Endothelial cell of umbilical vein (primary cell): ENCODE measurements at regions of chr16 and their contacts with region 1.

Region 1: GRCh38 chr16:29784901-29785500 is 5.5 kb upstream of the KIF22 start:
- DNase-seq: peak; percentile 76
- H3K4me3 ChIP-seq: peak overlapping the region in 1 of 3 experiments; percentile 5
- H3K27ac ChIP-seq: no peak overlapping the region
- H3K4me1 ChIP-seq: peaks cover 10% of the 10 kb centered on the region
- H3K27me3 ChIP-seq: peaks cover 7 to 16% of the 10 kb centered on the region in 2 experiments
- CTCF ChIP-seq: peak; percentile 91 to 98
- POLR2A ChIP-seq: no peak

Region 2: DNA sequence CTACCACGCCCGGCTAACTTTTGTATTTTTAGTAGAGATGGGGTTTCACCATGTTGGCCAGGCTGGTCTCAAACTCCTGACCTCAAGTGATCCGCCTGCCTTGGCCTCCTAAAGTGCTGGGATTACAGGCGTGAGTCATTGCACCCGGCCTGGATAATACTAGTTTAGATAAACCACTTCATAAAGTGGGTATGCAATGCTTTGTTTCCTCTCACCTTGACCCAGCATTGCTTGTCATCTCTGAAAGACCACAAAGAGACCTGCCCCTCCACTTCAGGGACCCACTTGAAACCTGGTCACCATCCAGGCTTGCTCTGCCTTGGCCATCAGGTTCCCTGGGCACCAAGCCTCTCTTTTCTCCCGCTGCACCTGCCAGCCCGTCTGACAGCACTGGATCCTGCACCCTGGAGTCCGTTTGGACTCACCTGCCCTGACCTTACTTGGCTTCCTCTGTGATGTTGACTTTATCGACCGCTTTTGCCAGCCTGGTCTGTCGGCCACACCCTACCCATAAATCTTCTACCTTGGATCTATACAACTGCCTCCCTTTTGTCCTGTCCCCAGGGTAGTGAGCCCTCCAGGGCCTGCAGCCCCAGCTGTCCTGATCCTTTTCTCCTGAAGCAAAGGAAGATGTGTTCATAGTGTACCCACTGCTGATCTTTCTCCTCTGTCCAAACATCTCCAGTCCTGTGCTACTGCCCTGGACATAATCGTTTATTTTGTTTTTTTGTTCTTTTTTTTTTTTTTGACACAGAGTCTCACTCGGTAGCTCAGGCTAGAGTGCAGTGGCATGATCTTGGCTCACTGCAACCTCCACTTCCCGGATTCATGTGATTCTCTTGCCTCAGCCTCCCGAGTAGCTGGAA is 19.6 kb before region 1 on chr16:
- CTCF ChIA-PET with region 1: interaction called, 26 read pairs
- POLR2A ChIA-PET with region 1: no interaction called
- dilution Hi-C with region 1: no loop called
- intact Hi-C with region 1: no loop called
- DNase-seq: no peak
- H3K4me3 ChIP-seq: no peak overlapping the region
- H3K27ac ChIP-seq: no peak overlapping the region
- H3K4me1 ChIP-seq: no peaks in the 10 kb centered on the region
- H3K27me3 ChIP-seq: no peaks in the 10 kb centered on the region
- CTCF ChIP-seq: no peak
- POLR2A ChIP-seq: no peak